ENCODE measurements at regions of chr1 and their contacts with region 1.

Region 1: DNA sequence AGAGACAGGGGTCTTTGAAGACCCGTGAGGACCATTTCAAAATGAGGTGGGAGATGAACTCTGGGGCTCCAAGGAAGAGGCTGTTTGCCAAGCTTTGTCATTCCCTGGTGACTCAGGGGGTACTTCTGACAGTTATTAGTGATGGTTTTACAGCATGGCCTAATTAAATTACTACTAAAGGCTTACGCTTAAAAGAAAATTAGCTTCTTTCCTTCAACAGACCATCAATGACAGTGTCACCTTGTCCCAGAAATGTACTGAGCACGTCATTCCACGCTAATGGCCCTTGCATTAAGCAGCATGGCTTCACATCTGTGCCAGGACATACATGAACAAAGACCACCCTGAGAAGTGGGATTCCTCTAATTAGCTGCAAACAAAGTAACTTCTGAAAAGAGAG is 5.1 kb upstream of the UTS2 start:
- DNase-seq: no peak
- H3K4me3 ChIP-seq: no peak overlapping the region
- H3K27ac ChIP-seq: no peak overlapping the region
- H3K4me1 ChIP-seq: no peaks in the 10 kb centered on the region
- H3K27me3 ChIP-seq: no peaks in the 10 kb centered on the region
- CTCF ChIP-seq: no peak
- EP300 ChIP-seq: no peak
- POLR2A ChIP-seq: no peak

Region 2: GRCh38 chr1:7491109-7491817 is 366.7 kb before region 1 on chr1:
- intact Hi-C with region 1: no loop called
- DNase-seq: peak in 3 of 5 donors; percentile 47 to 71 (median 57)
- H3K4me3 ChIP-seq: no peak overlapping the region
- H3K27ac ChIP-seq: peak overlapping the region; percentile 22 to 27
- H3K4me1 ChIP-seq: peaks cover 8% of the 10 kb centered on the region
- H3K27me3 ChIP-seq: no peaks in the 10 kb centered on the region
- CTCF ChIP-seq: no peak
- EP300 ChIP-seq: no peak
- POLR2A ChIP-seq: no peak

Region 3: GRCh38 chr1:7845761-7846160 is 12.2 kb before region 1 on chr1:
- intact Hi-C with region 1: loop called in 1 of 4 experiments (anchors 2 kb)
- DNase-seq: no peak
- H3K4me3 ChIP-seq: no peak overlapping the region
- H3K27ac ChIP-seq: no peak overlapping the region
- H3K4me1 ChIP-seq: peaks cover 1% of the 10 kb centered on the region
- H3K27me3 ChIP-seq: no peaks in the 10 kb centered on the region
- CTCF ChIP-seq: no peak
- EP300 ChIP-seq: no peak
- POLR2A ChIP-seq: no peak

Measured in ovary (tissue), 10 donors.